ENCODE measurements at regions of chr9 and their contacts with region 1.

Region 1: GRCh38 chr9:2620919-2621679 is 488 bp upstream of the VLDLR start:
- DNase-seq: peak; percentile 61
- H3K4me3 Mint-ChIP-seq: peak overlapping the region; percentile 75
- H3K27ac Mint-ChIP-seq: peak overlapping the region; percentile 77
- H3K4me1 Mint-ChIP-seq: peaks cover 5% of the 10 kb centered on the region
- H3K27me3 Mint-ChIP-seq: no peaks in the 10 kb centered on the region
- CTCF ChIP-seq: no peak

Region 2: GRCh38 chr9:2559212-2560152 is 61.6 kb before region 1 on chr9:
- CTCF ChIA-PET with region 1: no interaction called
- POLR2A ChIA-PET with region 1: no interaction called
- intact Hi-C with region 1: loop called (anchors 5 kb)
- DNase-seq: peak; percentile 85
- H3K4me3 Mint-ChIP-seq: no peak overlapping the region
- H3K27ac Mint-ChIP-seq: no peak overlapping the region
- H3K4me1 Mint-ChIP-seq: peaks cover 26% of the 10 kb centered on the region
- H3K27me3 Mint-ChIP-seq: no peaks in the 10 kb centered on the region
- CTCF ChIP-seq: no peak

Region 3: GRCh38 chr9:2727966-2728613 is 107.0 kb after region 1 on chr9:
- CTCF ChIA-PET with region 1: no interaction called
- POLR2A ChIA-PET with region 1: no interaction called
- intact Hi-C with region 1: loop called (anchors 1 kb)
- DNase-seq: peak; percentile 62
- H3K4me3 Mint-ChIP-seq: no peak overlapping the region
- H3K27ac Mint-ChIP-seq: no peak overlapping the region
- H3K4me1 Mint-ChIP-seq: peaks cover 6% of the 10 kb centered on the region
- H3K27me3 Mint-ChIP-seq: no peaks in the 10 kb centered on the region
- CTCF ChIP-seq: peak; percentile 36

Region 4: DNA sequence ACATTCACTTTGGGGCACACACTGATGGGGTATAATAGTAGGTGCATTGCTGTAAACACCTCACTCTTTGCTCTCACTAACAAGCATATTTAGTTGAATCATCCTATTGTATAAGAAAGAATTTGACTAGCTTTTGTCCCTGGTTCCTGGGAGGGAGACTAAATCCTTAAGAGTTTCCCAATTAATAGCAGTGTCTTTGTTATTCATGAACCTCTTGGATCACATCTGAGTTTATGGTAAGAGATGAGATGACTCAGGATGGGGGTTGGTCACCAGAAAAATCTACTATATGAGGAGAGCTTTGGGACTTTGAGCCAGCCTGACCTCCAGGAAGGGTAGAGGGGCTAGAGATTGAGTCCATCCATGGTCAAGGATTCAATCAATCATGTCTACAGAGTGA is 166.0 kb after region 1 on chr9:
- CTCF ChIA-PET with region 1: no interaction called
- POLR2A ChIA-PET with region 1: no interaction called
- intact Hi-C with region 1: loop called (anchors 10 kb)
- DNase-seq: peak; percentile 14
- H3K4me3 Mint-ChIP-seq: no peak overlapping the region
- H3K27ac Mint-ChIP-seq: no peak overlapping the region
- H3K4me1 Mint-ChIP-seq: peaks cover 4% of the 10 kb centered on the region
- H3K27me3 Mint-ChIP-seq: no peaks in the 10 kb centered on the region
- CTCF ChIP-seq: no peak

Region 5: GRCh38 chr9:2849941-2850340 is 228.8 kb after region 1 on chr9:
- CTCF ChIA-PET with region 1: no interaction called
- POLR2A ChIA-PET with region 1: no interaction called
- intact Hi-C with region 1: loop called (anchors 10 kb)
- DNase-seq: no peak
- H3K4me3 Mint-ChIP-seq: no peak overlapping the region
- H3K27ac Mint-ChIP-seq: no peak overlapping the region
- H3K4me1 Mint-ChIP-seq: peaks cover 5% of the 10 kb centered on the region
- H3K27me3 Mint-ChIP-seq: peaks cover 10% of the 10 kb centered on the region
- CTCF ChIP-seq: no peak

Measured in MCF 10A (cell line).